PC-3 (cell line): ENCODE measurements at regions of chr14 and their contacts with region 1.

Region 1: DNA sequence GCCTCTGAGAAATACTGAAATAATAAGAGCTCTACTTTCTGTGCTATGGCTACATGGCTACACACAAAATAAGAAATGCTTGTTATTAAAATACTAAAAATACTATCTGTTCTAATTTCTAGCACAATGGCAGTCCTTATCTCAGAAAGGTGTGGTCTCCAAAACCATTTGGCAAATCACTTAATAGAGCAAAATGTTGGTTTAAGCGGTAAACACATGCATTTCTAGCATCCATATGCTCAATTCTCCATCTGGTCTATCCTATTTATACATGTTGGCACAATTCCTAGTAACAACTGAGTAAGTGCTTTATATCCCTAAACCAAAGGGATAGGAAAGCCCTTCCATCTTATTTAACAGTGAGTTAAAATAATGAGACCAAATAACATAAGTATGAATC is 107.0 kb downstream of the PAPLN start:
- DNase-seq: no peak
- ATAC-seq: no peak
- H3K4me3 ChIP-seq: no peak overlapping the region
- H3K27ac ChIP-seq: no peak overlapping the region
- H3K4me1 ChIP-seq: no peaks in the 10 kb centered on the region
- H3K27me3 ChIP-seq: no peaks in the 10 kb centered on the region
- CTCF ChIP-seq: no peak

Region 2: DNA sequence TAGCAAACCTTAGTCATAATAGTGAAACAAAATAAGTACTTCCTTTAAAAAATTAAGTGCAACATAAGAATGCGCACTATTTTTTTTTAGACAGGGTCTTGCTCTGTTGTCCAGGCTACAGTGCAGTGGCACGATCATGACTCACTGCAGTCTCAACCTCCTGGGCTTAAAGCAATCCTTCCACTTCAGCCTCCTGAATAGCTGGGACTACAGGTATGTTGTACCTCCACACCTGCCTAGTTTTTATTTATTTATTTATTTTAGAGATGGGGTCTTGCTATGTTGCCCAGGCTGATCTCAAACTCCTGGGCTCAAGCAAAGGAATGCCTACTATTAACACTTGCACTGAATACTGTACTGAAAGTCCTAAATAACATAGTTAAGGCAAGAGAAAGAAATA is 20.2 kb after region 1 on chr14:
- CTCF ChIA-PET with region 1: no interaction called
- POLR2A ChIA-PET with region 1: no interaction called
- intact Hi-C with region 1: loop called (anchors 1 kb)
- DNase-seq: no peak
- ATAC-seq: no peak
- H3K4me3 ChIP-seq: no peak overlapping the region
- H3K27ac ChIP-seq: no peak overlapping the region
- H3K4me1 ChIP-seq: no peaks in the 10 kb centered on the region
- H3K27me3 ChIP-seq: no peaks in the 10 kb centered on the region
- CTCF ChIP-seq: no peak